ENCODE measurements at regions of chr1 and their contacts with region 1.

Region 1: GRCh38 chr1:156740679-156741612 is at the start of gene MRPL24:
- DNase-seq: peak; percentile 99
- H3K4me3 ChIP-seq: peak within 1 kb of the TSS; percentile 74
- H3K27ac ChIP-seq: peak within 1 kb of the TSS; percentile 70
- H3K4me1 ChIP-seq: peaks cover 26% of the 10 kb centered on the region
- CTCF ChIP-seq: no peak
- total RNA-seq, gene MRPL24: 55.3 and 69.0 TPM in 2 replicates

Region 2: DNA sequence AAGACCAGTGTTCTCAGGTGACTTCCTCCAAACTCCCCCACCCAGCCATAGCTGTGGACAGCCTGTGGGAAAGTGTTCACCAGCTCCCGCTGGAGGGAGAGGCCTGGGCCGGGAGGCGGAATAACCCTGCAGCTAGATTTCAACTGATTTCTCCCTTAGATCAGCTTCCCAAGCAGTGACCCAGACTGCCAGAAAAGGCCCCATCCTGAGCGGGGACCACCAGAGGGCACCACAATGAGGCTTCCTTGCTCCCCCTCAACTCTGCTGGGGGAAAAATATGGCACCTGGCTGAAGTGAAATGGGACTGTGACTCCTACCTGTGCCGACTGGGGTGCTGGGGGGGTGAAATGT is 321.1 kb before region 1 on chr1:
- CTCF ChIA-PET with region 1: no interaction called
- POLR2A ChIA-PET with region 1: no interaction called
- intact Hi-C with region 1: no loop called
- DNase-seq: peak; percentile 44
- H3K4me3 ChIP-seq: peak overlapping the region; percentile 18
- H3K27ac ChIP-seq: no peak overlapping the region
- H3K4me1 ChIP-seq: peaks cover 16% of the 10 kb centered on the region
- CTCF ChIP-seq: peak; percentile 72

Region 3: GRCh38 chr1:156528041-156528630 is 212.8 kb before region 1 on chr1:
- CTCF ChIA-PET with region 1: no interaction called
- POLR2A ChIA-PET with region 1: no interaction called
- intact Hi-C with region 1: no loop called
- DNase-seq: no peak
- H3K4me3 ChIP-seq: no peak overlapping the region
- H3K27ac ChIP-seq: no peak overlapping the region
- H3K4me1 ChIP-seq: peaks cover 35% of the 10 kb centered on the region
- CTCF ChIP-seq: no peak

Region 4: DNA sequence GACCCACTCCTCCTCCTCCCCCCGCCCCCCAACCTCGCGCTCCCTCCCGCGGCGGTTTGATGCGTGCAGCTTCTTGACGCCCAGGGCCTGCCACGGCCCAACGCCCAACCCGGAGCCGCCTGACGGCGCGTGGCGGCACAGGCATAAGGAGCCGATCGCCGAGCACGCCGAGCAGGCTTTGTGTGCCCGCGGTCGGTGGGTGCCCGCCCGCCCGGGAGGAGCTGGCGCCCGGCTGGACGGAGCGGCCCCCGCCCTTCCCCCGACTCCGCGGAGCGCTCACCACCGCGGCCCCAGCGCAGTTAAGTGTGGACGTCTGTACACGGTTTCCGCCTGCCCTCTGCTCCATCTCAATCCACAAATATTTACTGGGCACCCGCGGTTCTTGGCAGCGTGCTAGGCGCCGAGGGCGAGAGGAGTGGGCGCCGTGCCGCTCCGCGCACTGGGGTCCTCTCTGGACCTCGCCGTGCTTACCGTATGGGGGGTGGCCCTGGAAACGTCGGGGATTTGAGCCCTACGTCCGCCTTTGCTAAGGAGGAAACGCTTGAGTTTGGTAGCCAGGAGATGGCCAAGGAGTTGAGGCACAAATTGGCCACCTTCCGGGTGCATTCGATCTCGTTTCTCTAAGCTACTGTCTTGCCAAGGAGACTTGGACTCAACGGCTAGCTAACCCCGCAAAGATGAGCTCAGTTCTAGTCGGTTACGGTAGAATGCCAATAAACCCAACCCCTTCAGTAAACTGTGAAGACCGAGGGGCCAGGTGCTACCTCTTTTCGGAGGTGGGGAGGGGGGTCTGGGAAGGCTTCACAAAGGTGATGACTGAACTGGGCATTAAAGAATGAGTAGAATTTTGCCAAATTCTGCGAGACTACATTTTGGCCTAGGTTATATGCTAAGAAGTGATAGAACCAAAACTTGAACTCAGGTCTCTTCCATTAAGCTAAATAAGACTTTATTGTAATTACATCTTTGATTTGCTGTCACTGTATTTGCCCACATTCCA is 11.1 kb after region 1 on chr1:
- CTCF ChIA-PET with region 1: no interaction called
- POLR2A ChIA-PET with region 1: interaction called, 7 read pairs
- intact Hi-C with region 1: loop called (anchors 1 kb)
- DNase-seq: peak; percentile 97
- H3K4me3 ChIP-seq: peak overlapping the region; percentile 85
- H3K27ac ChIP-seq: peak overlapping the region; percentile 81
- H3K4me1 ChIP-seq: peaks cover 40% of the 10 kb centered on the region
- CTCF ChIP-seq: no peak

Measured in OCI-LY7 (cell line).